ENCODE measurements at regions of chr18 and their contacts with region 1.

Region 1: GRCh38 chr18:37476182-37476581 is 89.4 kb downstream of the CELF4 start:
- DNase-seq: peak; percentile 62
- H3K4me3 ChIP-seq: no peak overlapping the region
- H3K27ac ChIP-seq: no peak overlapping the region
- H3K4me1 ChIP-seq: no peaks in the 10 kb centered on the region
- H3K27me3 ChIP-seq: peaks cover 80% of the 10 kb centered on the region
- CTCF ChIP-seq: peak; percentile 74

Region 2: DNA sequence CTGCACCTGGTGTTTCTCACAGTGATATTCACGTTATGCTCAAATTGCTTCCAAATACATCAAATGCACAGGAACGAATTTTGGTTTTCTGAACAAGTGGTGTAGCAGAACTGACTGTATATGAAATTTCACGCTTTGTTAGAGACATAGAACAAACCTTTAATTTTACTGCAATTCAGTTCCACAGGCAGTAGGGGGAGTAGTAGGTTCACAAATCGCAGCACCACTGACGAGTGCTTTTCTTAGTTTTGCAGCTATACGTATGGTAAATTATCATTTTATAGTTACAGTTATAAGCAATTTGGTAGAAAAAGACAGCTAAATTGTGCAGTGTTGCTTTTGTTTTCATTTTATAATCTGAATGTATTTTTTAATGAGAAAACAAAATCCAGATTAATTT is 533.9 kb before region 1 on chr18:
- CTCF ChIA-PET with region 1: no interaction called
- POLR2A ChIA-PET with region 1: no interaction called
- intact Hi-C with region 1: loop called (anchors 2 kb)
- DNase-seq: peak; percentile 56
- H3K4me3 ChIP-seq: no peak overlapping the region
- H3K27ac ChIP-seq: no peak overlapping the region
- H3K4me1 ChIP-seq: no peaks in the 10 kb centered on the region
- H3K27me3 ChIP-seq: no peaks in the 10 kb centered on the region
- CTCF ChIP-seq: peak; percentile 72

Region 3: GRCh38 chr18:37322492-37323035 is 153.6 kb before region 1 on chr18:
- CTCF ChIA-PET with region 1: no interaction called
- POLR2A ChIA-PET with region 1: no interaction called
- intact Hi-C with region 1: loop called (anchors 1 kb)
- DNase-seq: peak; percentile 70
- H3K4me3 ChIP-seq: no peak overlapping the region
- H3K27ac ChIP-seq: no peak overlapping the region
- H3K4me1 ChIP-seq: no peaks in the 10 kb centered on the region
- H3K27me3 ChIP-seq: no peaks in the 10 kb centered on the region
- CTCF ChIP-seq: peak; percentile 85

Region 4: DNA sequence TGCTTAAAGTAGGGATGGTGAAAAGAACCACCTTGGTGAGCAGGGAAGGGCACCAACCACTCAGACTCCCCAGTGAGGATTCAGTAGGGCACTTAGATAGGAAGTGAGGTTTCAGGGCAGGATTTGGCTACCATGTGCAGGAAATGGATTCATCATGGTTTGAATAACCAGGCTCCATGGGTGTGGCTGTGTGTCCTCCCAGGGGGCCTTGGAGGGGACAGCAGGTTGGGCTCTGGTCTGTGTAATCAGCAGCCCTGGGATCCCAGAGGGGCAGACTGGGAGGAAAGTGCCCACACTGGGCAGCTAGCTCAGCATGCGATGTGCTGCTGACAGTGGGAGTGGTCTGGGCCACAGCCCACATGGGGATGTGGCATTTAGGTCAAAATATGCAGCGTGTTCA is 135.2 kb before region 1 on chr18:
- CTCF ChIA-PET with region 1: no interaction called
- POLR2A ChIA-PET with region 1: no interaction called
- intact Hi-C with region 1: loop called (anchors 1 kb)
- DNase-seq: peak; percentile 61
- H3K4me3 ChIP-seq: no peak overlapping the region
- H3K27ac ChIP-seq: no peak overlapping the region
- H3K4me1 ChIP-seq: no peaks in the 10 kb centered on the region
- H3K27me3 ChIP-seq: no peaks in the 10 kb centered on the region
- CTCF ChIP-seq: no peak

Measured in A673 (cell line).